Activated naive CD4-positive, alpha-beta T cell treated with anti-CD3 and anti-CD28 coated beads, Interleukin-2, amount 10 ng/mL, durations not matched to agents 7 days and 5 days (primary cell): ENCODE measurements at regions of chr1 and their contacts with region 1.

Region 1: GRCh38 chr1:3856908-3857790 is at the starts of genes CEP104 and DFFB:
- DNase-seq: peak; percentile 98
- H3K4me3 Mint-ChIP-seq: peak within 1 kb of the TSS; percentile 97
- H3K27ac Mint-ChIP-seq: peak within 1 kb of the TSS; percentile 93
- H3K4me1 Mint-ChIP-seq: peaks cover 34% of the 10 kb centered on the region
- H3K27me3 Mint-ChIP-seq: no peaks in the 10 kb centered on the region

Region 2: GRCh38 chr1:3668585-3669300 is 188.4 kb before region 1 on chr1:
- CTCF ChIA-PET with region 1: no interaction called
- DNase-seq: no peak
- H3K4me3 Mint-ChIP-seq: no peak overlapping the region
- H3K27ac Mint-ChIP-seq: no peak overlapping the region
- H3K4me1 Mint-ChIP-seq: no peaks in the 10 kb centered on the region
- H3K27me3 Mint-ChIP-seq: peaks cover 23% of the 10 kb centered on the region

Region 3: GRCh38 chr1:3906672-3907534 is 49.8 kb after region 1 on chr1:
- CTCF ChIA-PET with region 1: interaction called, 15 read pairs
- DNase-seq: peak; percentile 51
- H3K4me3 Mint-ChIP-seq: no peak overlapping the region
- H3K27ac Mint-ChIP-seq: no peak overlapping the region
- H3K4me1 Mint-ChIP-seq: peaks cover 45% of the 10 kb centered on the region
- H3K27me3 Mint-ChIP-seq: peaks cover 35% of the 10 kb centered on the region